Dendritic cell treated with granulocyte-macrophage colony-stimulating factor and Interleukin-4, amounts not matched to agents 40 ng/mL and 50 ng/mL, for 4 days (primary cell): ENCODE measurements at regions of chr16 and their contacts with region 1.

Region 1: DNA sequence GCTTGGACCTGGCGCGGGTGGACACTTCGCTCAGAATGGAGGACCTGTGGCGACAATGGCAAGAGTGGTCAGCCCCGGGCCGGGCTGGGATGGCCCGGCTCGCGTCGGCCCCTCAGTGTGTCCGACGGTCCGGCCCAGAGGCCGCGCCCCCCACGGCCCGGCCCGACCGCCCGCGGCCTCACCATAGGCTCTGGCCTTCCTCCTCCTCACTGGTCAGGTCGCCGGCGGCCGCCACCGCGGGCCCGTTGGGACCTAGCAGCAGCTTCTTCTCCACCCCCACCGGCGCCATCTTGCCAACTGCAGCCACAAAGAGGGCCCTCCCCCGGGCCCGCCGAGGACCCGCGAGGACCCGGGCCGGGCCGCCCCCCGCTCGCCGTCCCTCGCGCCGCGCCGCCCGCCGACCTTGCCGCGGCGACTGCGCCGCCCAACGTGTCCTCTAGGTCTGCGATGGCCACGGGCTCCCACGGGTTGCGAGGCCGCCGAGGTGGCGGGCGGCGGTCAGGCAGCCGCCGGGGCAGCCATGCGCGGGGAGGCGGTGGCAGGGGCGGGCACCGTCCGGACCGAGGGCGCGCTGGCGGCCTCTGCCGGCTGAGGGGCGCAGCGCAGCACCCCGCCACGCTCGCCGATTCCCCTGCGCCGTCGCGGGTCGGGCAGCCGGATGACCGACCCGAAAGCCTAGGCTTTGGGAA is at the start of gene DYNC1LI2:
- H3K4me3 Mint-ChIP-seq: peak within 1 kb of the TSS; percentile 90
- H3K27ac Mint-ChIP-seq: peak within 1 kb of the TSS; percentile 81
- H3K4me1 Mint-ChIP-seq: peaks cover 42% of the 10 kb centered on the region
- H3K27me3 Mint-ChIP-seq: peaks cover 14% of the 10 kb centered on the region

Region 2: DNA sequence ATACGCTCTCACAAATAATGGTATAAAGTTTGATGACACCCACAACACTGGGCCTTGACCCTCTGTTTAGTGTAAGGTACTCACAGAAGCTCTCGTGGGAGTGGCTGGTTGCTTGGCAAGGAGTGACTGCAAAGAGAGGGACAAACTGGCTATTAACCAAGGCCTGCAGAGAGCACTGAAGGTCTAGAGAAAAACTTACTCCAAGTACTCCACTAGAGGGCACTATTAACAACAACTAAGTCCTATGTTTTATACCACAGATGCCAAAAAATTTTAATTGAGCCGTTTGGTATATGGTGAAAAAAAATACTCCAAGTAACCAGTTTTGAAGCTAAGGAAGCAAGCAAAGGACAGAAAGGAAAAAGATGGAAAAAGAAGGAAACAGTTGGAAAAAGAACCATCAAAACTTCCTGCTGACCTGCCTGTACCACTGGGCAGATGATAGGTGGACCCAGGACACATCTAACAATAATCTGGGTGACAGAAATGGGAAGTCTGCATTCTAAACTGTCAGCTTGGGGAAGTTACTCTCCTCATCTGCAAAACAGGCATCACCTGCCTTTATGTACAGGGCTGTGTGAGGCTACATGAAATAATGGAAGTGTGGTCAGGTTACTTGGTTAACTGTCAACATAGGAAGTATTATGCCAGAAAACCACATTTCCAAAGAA is 23.2 kb before region 1 on chr16:
- intact Hi-C with region 1: loop called (anchors 1 kb)
- H3K4me3 Mint-ChIP-seq: no peak overlapping the region
- H3K27ac Mint-ChIP-seq: peak overlapping the region; percentile 9
- H3K4me1 Mint-ChIP-seq: peaks cover 12% of the 10 kb centered on the region
- H3K27me3 Mint-ChIP-seq: no peaks in the 10 kb centered on the region